Body of pancreas (tissue), 4 donors: ENCODE measurements at regions of chr16 and their contacts with region 1.

Region 1: DNA sequence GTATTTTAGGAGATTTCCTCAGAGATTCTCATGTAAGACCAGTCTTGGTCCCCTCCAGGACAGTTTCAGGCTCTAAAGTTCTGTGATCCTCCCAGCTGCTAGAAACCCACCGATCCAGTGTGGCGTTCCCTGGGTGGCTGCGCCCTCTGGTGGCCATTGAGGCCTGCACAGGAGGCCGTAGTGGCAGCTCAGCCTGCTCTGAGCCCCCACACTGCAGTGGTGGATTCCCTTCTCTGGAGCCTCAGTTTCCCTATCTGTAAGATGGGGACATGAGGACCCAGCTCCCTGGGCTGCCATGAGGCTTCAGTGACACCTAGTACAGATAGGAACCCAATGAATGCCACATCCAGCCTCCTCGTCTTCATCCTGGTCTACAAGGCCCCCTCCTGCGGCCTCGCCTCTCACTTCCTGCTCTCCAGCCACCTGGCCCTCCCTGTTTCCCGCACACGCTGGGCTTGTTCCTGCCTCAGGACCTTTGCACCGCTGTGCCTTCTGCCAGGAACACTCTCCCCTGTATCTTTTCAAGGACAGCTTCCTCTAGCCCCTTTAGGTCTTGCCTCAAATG is 16.5 kb downstream of the CCDC102A start:
- DNase-seq: peak; percentile 77 to 84 (median 80)
- ATAC-seq: peak; percentile 80
- H3K4me3 ChIP-seq: no peak overlapping the region
- H3K27ac ChIP-seq: no peak overlapping the region
- H3K4me1 ChIP-seq: no peaks in the 10 kb centered on the region
- H3K27me3 ChIP-seq: no peaks in the 10 kb centered on the region
- CTCF ChIP-seq: peak; percentile 87 to 93 (median 91)
- POLR2A ChIP-seq: no peak

Region 2: DNA sequence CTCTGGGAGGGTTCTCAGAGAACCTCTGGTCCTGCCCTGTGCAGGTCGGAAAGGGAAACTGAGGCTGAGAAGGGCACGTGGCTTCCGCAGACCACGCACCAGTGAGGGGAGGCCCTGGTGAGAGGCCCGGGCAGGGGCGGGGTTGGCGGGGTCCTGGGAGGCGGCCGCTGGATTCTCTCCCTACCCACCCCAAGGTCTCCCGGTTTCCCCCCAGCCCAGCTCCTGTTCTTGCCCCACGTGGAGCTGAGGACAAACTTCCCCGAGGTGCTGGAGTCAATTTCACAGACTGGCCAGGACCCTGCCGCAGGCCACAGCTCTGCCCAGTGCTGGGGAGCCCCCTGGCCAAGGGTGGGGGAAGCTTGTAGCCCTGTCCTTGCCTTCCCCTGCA is 103.8 kb before region 1 on chr16:
- intact Hi-C with region 1: loop called (anchors 5 kb)
- DNase-seq: no peak
- ATAC-seq: no peak
- H3K4me3 ChIP-seq: no peak overlapping the region
- H3K27ac ChIP-seq: no peak overlapping the region
- H3K4me1 ChIP-seq: peaks cover 18% of the 10 kb centered on the region
- H3K27me3 ChIP-seq: no peaks in the 10 kb centered on the region
- CTCF ChIP-seq: no peak
- POLR2A ChIP-seq: no peak

Region 3: GRCh38 chr16:57452021-57452420 is 67.9 kb before region 1 on chr16:
- intact Hi-C with region 1: no loop called
- DNase-seq: no peak
- ATAC-seq: no peak
- H3K4me3 ChIP-seq: no peak overlapping the region
- H3K27ac ChIP-seq: no peak overlapping the region
- H3K4me1 ChIP-seq: peaks cover 14% of the 10 kb centered on the region
- H3K27me3 ChIP-seq: no peaks in the 10 kb centered on the region
- CTCF ChIP-seq: no peak
- POLR2A ChIP-seq: no peak

Region 4: DNA sequence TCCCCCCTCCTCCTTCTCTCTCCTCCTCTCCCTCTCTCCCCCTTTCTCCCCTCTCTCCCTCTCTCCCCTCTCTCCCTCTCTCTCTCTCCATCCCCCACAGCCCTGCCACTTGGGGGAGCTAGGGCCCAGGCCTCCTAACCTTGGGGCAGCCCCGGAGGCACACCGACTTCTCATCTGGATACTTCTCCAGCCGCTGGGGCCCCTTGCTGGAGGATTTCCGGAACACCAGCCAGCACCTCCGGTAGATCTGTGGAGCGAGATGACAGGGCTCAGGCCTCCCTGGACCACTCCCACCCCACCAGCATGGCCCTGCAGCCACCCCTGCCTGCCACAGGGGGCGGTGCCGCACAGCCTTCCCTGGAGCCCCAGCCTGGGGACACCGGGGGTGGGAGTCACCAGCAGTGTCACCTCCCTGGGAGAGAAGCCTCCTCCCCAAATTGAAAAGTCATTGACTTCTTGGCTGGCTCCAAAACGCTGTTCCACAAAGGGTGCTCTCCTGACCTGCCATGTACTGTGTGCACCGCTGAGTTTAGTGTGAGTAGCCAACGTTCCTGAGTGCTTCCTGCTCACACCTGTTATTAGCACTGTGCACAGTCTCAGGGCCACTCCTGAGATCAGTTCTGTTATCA is 44.1 kb before region 1 on chr16:
- intact Hi-C with region 1: no loop called
- DNase-seq: peak in 1 of 4 donors; percentile 31
- ATAC-seq: no peak
- H3K4me3 ChIP-seq: no peak overlapping the region
- H3K27ac ChIP-seq: no peak overlapping the region
- H3K4me1 ChIP-seq: peaks cover 67% of the 10 kb centered on the region
- H3K27me3 ChIP-seq: no peaks in the 10 kb centered on the region
- CTCF ChIP-seq: peak in 4 of 7 experiments; percentile 18 to 25 (median 21)
- POLR2A ChIP-seq: no peak